Activated naive CD4-positive, alpha-beta T cell treated with anti-CD3 and anti-CD28 coated beads for 36 hours (primary cell): ENCODE measurements at regions of chr16 and their contacts with region 1.

Region 1: DNA sequence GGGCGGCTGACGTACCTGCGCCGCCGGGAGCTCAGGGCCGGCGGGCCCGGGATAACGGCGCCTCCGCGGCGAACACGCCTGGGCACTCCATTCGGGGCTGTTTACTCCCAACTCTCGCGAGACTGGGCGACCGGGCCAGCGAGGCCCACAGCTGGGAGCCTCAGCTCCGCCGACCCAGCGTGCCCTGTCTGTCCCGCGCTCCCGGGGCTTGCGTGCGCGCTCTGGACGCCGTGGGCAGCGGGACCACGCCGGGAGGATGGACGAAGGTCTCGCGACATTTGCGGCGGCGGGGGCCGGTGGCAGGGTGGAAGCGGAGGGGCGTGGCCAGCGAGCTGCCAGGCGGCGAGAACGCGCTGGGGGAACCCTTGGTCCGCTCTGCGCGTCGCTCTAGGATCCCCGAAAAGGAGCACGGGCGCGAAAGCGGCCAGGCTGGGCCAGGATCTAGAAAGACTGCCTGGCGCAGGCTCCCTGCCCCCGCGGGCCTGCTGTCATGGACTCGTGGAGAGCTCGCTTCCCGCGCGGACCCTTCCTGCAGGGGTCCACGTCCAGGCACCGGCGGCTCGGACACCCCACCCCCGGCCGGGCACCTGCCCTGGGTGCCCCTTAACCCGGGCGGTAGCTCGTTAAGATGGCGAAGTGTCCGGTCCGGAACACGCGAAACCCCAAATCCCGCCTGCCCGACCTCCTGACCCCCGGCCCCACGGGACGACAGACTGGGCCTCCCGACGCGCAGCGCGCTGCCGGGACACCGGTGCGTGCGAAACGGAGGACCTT is at the start of gene MBTPS1:
- DNase-seq: peak; percentile 98
- H3K4me3 Mint-ChIP-seq: peak within 1 kb of the TSS; percentile 91
- H3K27ac Mint-ChIP-seq: peak within 1 kb of the TSS; percentile 89
- H3K4me1 Mint-ChIP-seq: peaks cover 26% of the 10 kb centered on the region
- H3K27me3 Mint-ChIP-seq: no peaks in the 10 kb centered on the region
- total RNA-seq, gene MBTPS1: 36.9 to 41.3 TPM

Region 2: DNA sequence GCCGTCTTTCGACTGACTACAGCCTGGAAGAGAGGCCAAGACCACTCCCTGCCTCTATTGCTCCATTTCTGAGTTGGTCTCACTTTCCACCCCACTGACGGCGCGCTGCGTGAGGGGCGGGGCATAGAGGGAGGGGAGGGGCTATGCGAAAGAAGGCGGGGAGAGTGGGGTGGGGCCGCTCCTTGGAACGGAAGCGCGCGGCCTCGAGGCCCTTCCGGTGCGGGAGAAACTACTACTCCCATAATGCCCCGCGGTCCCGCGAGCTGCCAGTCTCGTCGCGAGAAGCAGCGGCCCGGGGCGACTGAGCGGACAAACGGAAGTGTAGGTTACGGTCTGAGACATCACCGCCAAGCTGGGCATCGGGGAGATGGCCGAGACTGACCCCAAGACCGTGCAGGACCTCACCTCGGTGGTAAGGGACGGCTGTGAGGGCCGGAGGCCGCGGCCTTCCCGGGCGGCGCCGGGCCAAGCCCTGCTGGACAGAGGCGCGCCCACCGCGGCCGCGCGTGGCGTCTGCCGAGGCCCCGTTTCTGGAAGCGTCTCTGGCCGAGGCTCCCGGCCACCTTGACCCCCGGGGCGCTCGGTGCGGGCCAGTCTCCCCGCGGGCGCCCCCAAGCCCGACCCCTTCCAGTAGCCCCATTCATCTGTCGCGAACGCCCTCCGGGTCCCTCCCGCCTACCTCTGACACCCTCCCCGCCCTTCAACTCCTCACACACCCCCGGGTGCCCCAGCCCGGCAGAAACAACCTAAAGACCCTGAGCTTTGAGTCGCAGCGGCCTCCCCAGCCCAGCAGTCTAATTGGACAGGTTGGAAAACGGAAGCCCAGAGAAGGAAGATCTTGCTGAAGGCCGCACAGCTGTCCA is 309.0 kb before region 1 on chr16 and contains the start of gene HSBP1:
- CTCF ChIA-PET with region 1: no interaction called
- intact Hi-C with region 1: loop called (anchors 2 kb)
- DNase-seq: peak; percentile 95
- H3K4me3 Mint-ChIP-seq: peak within 1 kb of the TSS; percentile 98
- H3K27ac Mint-ChIP-seq: peak within 1 kb of the TSS; percentile 95
- H3K4me1 Mint-ChIP-seq: peaks cover 37% of the 10 kb centered on the region
- H3K27me3 Mint-ChIP-seq: no peaks in the 10 kb centered on the region
- total RNA-seq, gene HSBP1: 72.1 to 72.8 TPM

Region 3: GRCh38 chr16:83898463-83899271 is 218.2 kb before region 1 on chr16 and contains the start of gene MLYCD:
- CTCF ChIA-PET with region 1: no interaction called
- intact Hi-C with region 1: loop called (anchors 2 kb)
- DNase-seq: peak; percentile 63
- H3K4me3 Mint-ChIP-seq: peak within 1 kb of the TSS; percentile 86
- H3K27ac Mint-ChIP-seq: peak within 1 kb of the TSS; percentile 10
- H3K4me1 Mint-ChIP-seq: peaks cover 22% of the 10 kb centered on the region
- H3K27me3 Mint-ChIP-seq: no peaks in the 10 kb centered on the region
- total RNA-seq, gene MLYCD: 2.0 to 2.3 TPM

Region 4: DNA sequence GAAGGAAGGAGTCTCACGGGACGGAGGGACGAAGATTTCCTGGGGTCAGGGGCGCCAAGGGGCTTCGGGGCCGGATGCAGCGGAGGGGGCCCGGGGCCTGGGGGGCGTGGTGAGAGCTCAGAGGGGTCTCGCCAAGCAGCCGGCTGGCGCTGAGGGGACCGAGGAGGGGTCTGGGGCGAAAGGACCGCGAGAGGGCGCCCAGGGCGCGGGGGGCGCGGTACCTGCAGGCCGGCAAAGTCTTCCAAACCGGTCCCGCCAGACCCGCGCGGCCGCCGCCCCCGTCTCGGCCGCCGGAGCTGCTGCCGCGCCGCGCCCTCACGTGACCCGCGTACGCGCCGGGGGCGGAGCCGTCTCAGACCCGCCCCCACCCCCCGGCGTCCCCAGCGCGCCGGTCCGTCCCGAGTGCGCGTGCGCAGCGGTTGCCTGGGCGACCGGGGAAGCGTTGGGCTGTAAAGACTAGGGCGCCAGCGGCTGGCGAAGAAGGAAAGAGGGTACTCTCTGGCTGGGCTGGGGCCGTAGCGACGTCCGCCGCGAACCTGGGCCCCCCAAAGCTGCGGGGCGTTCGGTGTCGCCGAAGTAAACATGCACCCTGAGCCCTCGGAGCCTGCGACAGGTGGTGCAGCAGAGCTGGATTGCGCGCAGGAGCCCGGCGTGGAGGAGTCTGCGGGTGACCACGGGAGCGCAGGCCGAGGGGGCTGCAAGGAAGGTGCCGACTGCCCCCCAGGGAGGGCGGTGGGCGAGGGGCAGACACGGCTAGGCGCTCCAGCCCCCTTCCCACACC is 28.1 kb after region 1 on chr16 and contains the starts of genes DNAAF1 and HSDL1:
- CTCF ChIA-PET with region 1: interaction called, 3 read pairs
- intact Hi-C with region 1: loop called (anchors 1 kb)
- DNase-seq: peak; percentile 93
- H3K4me3 Mint-ChIP-seq: peak within 1 kb of the TSS; percentile 90
- H3K27ac Mint-ChIP-seq: no peak within 1 kb of the TSS
- H3K4me1 Mint-ChIP-seq: peaks cover 13% of the 10 kb centered on the region
- H3K27me3 Mint-ChIP-seq: no peaks in the 10 kb centered on the region
- total RNA-seq, gene DNAAF1: not detected
- total RNA-seq, gene HSDL1: 5.8 to 7.5 TPM

Region 5: GRCh38 chr16:84186685-84187437 is 70.0 kb after region 1 on chr16 and contains the start of gene TAF1C:
- CTCF ChIA-PET with region 1: interaction called, 12 read pairs
- intact Hi-C with region 1: loop called (anchors 1 kb)
- DNase-seq: peak; percentile 94
- H3K4me3 Mint-ChIP-seq: peak within 1 kb of the TSS; percentile 93
- H3K27ac Mint-ChIP-seq: peak within 1 kb of the TSS; percentile 89
- H3K4me1 Mint-ChIP-seq: peaks cover 21% of the 10 kb centered on the region
- H3K27me3 Mint-ChIP-seq: no peaks in the 10 kb centered on the region
- total RNA-seq, gene TAF1C: 59.3 to 66.2 TPM